ENCODE measurements at regions of chr15 and their contacts with region 1.

Region 1: GRCh38 chr15:43133430-43134156 is at the start of gene TMEM62:
- DNase-seq: peak; percentile 27 to 76 (median 54)
- ATAC-seq: peak; percentile 83 to 87
- H3K4me3 Mint-ChIP-seq: peak within 1 kb of the TSS; percentile 87 to 98 (median 92)
- H3K27ac Mint-ChIP-seq: peak within 1 kb of the TSS; percentile 87 to 96 (median 92)
- H3K4me1 Mint-ChIP-seq: peaks cover 9 to 27% (median 22%) of the 10 kb centered on the region in 4 donors
- H3K27me3 Mint-ChIP-seq: peaks cover 0 to 6% (median 0%) of the 10 kb centered on the region in 5 donors
- polyA plus RNA-seq, gene TMEM62: 1.6 to 5.8 (median 5.4) TPM

Region 2: DNA sequence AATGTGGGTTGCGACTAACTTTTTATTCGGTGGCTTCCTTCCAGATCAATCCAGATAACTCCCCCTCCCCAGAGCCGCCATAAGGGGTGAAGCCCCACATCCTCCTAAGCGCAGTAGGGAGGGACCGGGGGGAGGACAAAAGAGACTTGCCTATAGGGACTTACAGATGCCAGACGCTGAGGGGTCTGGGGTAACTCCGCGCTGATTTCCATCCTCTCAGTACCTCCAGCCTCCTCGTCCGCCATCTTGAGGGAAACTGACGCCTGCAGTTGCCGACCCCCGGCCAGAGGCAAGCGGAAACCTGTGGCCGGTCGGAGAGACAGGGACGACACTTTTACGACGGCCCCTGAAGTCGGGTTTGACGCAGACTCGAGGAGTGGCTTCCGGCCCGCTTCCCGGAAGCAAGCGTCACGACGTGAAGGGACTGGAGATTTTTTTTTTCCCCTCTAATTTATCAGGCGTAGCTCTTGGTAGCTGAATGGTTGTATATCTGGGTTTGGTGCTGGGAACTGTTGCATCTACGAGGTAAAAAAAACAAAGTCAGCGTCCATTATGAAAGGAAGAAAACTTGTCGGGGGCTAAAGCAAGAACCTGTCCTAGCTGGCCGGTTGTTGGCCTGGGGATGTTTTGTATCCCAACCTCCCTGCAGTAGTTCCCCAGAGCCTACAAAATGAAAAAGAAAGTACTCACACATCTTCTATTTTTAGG is 27.7 kb before region 1 on chr15 and contains the start of gene UBR1:
- POLR2A ChIA-PET with region 1: interaction called, 13 read pairs
- DNase-seq: peak; percentile 78 to 93 (median 88)
- ATAC-seq: peak; percentile 87
- H3K4me3 Mint-ChIP-seq: peak within 1 kb of the TSS; percentile 89 to 99 (median 96)
- H3K27ac Mint-ChIP-seq: peak within 1 kb of the TSS; percentile 97 to 99 (median 98)
- H3K4me1 Mint-ChIP-seq: peaks cover 37 to 56% (median 50%) of the 10 kb centered on the region in 4 donors
- H3K27me3 Mint-ChIP-seq: peaks cover 0 to 3% (median 0%) of the 10 kb centered on the region in 5 donors
- polyA plus RNA-seq, gene UBR1: 16.1 to 20.8 (median 17.2) TPM

Region 3: DNA sequence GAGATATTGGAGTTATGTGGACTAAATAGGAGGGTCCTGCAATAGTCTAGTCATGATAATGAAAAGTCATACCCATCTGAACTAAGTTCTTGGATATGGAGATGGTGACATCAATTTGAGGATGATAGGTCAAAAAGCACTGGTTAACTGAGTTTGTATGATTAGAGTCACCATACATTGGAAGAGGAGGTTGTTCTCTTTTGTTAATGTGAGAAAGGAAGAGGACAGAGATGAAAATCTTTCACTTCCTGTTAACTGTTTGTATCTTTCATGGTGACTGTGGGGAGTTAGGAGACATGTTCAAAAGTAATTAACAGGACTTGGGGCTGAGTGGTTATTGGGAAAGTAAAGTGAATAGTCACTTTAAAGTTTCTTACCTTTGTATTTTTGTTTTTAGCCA is 10.9 kb after region 1 on chr15:
- POLR2A ChIA-PET with region 1: no interaction called
- DNase-seq: no peak
- ATAC-seq: no peak
- H3K4me3 Mint-ChIP-seq: no peak overlapping the region
- H3K27ac Mint-ChIP-seq: no peak overlapping the region
- H3K4me1 Mint-ChIP-seq: peaks cover 12 to 18% (median 14%) of the 10 kb centered on the region in 4 donors
- H3K27me3 Mint-ChIP-seq: no peaks in the 10 kb centered on the region

Region 4: DNA sequence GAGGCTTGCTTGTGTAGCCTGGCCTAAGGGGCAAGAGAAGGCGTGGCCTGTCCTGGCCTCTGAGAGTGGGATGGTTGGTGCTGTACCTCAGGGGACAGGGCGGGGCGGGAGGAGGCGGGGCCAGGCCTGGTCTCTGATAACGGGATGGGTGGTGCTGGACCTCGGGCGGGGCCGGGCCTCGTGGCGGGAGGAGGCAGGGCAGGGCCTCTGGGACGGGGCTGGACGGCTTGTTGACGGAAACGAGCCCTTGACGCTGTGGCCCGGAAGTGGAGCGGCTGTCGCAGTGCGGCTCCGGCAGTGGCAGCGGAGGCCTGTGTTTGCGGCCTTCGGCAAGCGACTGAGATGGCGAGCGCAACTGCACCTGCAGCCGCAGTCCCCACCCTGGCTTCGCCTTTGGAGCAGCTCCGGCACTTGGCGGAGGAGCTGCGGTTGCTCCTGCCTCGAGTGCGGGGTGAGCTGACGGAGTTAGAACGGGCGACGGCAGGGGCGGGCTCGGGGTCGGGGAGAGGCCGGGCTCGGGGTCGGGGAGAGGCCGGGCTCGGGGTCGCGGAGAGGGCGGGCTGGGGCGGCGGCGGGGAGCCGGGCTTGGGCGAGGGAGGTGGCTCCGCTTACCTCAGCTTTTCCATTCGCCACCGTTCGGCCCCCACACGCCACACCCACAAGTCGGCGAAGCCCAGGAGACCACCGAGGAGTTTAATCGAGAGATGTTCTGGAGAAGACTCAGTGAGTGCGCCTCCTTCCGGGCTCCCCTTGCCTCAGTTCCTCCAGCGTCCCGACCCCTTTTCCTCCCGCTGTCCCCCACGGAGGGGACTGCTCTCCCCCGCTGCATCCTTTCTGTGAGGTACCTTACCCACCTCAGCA is 51.8 kb after region 1 on chr15 and contains the start of gene CCNDBP1:
- POLR2A ChIA-PET with region 1: interaction called, 10 read pairs
- DNase-seq: peak; percentile 65 to 92 (median 82)
- ATAC-seq: peak; percentile 79 to 86
- H3K4me3 Mint-ChIP-seq: peak within 1 kb of the TSS; percentile 91 to 97 (median 96)
- H3K27ac Mint-ChIP-seq: peak within 1 kb of the TSS; percentile 95 to 99 (median 98)
- H3K4me1 Mint-ChIP-seq: peaks cover 14 to 49% (median 42%) of the 10 kb centered on the region in 4 donors
- H3K27me3 Mint-ChIP-seq: no peaks in the 10 kb centered on the region
- polyA plus RNA-seq, gene CCNDBP1: 146 to 151 (median 147) TPM